Activated CD8-positive, alpha-beta T cell treated with anti-CD3 and anti-CD28 coated beads for 36 hours (primary cell): ENCODE measurements at regions of chr7 and their contacts with region 1.

Region 1: GRCh38 chr7:6516387-6516983 is 34.8 kb downstream of the GRID2IP start:
- DNase-seq: peak; percentile 83
- ATAC-seq: peak; percentile 88
- H3K4me3 Mint-ChIP-seq: peak overlapping the region; percentile 63
- H3K27ac Mint-ChIP-seq: no peak overlapping the region
- H3K4me1 Mint-ChIP-seq: peaks cover 6% of the 10 kb centered on the region
- H3K27me3 Mint-ChIP-seq: no peaks in the 10 kb centered on the region
- CTCF ChIP-seq: peak; percentile 95

Region 2: DNA sequence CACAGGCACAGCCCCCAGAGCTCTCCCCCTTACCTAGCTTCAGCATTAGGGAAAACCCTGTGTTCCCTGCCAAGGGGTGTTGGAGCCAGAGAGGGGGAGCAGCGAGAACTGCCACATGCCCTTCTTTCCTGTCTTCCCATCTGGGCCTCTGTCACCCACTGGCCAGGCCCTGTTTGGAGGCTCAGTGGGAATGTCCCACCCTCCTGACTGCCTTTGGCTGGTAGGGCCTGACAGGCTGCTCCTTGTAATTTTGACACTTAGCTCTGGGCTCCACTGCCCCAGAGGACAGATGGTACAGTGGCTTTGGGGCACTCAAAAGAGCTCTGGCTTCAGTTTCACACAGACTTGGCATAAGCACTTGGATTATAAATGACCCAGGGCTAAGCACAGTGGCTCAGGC is 15.8 kb before region 1 on chr7:
- CTCF ChIA-PET with region 1: interaction called, 10 read pairs
- POLR2A ChIA-PET with region 1: interaction called, 6 read pairs
- intact Hi-C with region 1: no loop called
- DNase-seq: no peak
- ATAC-seq: no peak
- H3K4me3 Mint-ChIP-seq: no peak overlapping the region
- H3K27ac Mint-ChIP-seq: no peak overlapping the region
- H3K4me1 Mint-ChIP-seq: peaks cover 3% of the 10 kb centered on the region
- H3K27me3 Mint-ChIP-seq: no peaks in the 10 kb centered on the region
- CTCF ChIP-seq: no peak

Region 3: GRCh38 chr7:6577365-6578113 is 61.1 kb after region 1 on chr7 and contains the start of gene ZDHHC4:
- CTCF ChIA-PET with region 1: interaction called, 29 read pairs
- POLR2A ChIA-PET with region 1: interaction called, 3 read pairs
- intact Hi-C with region 1: no loop called
- DNase-seq: peak; percentile 93
- ATAC-seq: peak; percentile 95
- H3K4me3 Mint-ChIP-seq: peak within 1 kb of the TSS; percentile 84
- H3K27ac Mint-ChIP-seq: peak within 1 kb of the TSS; percentile 89
- H3K4me1 Mint-ChIP-seq: peaks cover 28% of the 10 kb centered on the region
- H3K27me3 Mint-ChIP-seq: no peaks in the 10 kb centered on the region
- CTCF ChIP-seq: no peak
- total RNA-seq, gene ZDHHC4: 27.8 to 32.0 TPM

Region 4: GRCh38 chr7:6589829-6590644 is 73.6 kb after region 1 on chr7 and contains the start of gene INTS15:
- CTCF ChIA-PET with region 1: interaction called, 10 read pairs
- POLR2A ChIA-PET with region 1: no interaction called
- intact Hi-C with region 1: no loop called
- DNase-seq: peak; percentile 82
- ATAC-seq: peak; percentile 92
- H3K4me3 Mint-ChIP-seq: peak within 1 kb of the TSS; percentile 87
- H3K27ac Mint-ChIP-seq: peak within 1 kb of the TSS; percentile 84
- H3K4me1 Mint-ChIP-seq: peaks cover 22% of the 10 kb centered on the region
- H3K27me3 Mint-ChIP-seq: no peaks in the 10 kb centered on the region
- CTCF ChIP-seq: peak; percentile 76
- total RNA-seq, gene INTS15: 26.8 to 29.8 TPM